Activated CD4-positive, alpha-beta T cell treated with anti-CD3 and anti-CD28 coated beads for 36 hours (primary cell): ENCODE measurements at regions of chr2 and their contacts with region 1.

Region 1: DNA sequence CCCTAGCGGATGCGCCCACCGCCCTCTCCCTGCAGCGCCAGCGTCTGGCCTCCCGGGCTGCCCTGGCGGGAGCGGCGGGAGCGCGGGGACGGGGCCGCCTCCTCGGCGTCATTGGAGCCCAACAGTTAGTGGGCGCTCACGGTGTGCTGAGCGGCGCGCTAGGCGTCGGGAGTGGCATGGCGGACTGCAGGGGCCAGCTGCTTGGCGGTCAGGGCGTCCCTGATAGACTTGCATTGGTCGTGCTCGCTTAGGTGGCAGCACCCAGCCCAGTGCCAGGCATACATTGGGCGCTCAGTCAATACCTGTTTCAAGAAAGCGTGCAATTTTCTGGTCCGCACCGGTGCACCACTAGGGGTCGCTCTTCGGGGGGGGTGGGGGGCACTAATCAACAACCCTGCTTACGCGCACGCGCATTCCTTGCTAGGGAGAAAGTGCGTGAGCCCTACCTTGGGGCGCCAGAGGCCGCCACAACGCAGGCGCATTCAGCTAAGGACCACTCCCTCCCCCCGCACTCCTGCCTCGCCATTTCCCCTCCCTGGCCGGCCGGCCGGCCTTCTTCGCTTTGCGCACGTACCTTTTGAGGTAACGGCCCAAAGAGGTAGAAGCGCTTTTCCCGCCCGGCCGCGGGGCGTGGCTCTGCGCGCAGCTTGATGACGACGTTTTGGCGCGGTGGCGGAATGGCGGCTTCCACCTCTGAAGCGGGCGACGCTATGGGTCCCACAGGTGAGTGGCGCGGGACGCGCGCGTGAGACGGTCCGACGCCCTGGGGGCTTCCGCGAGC is 411 bp upstream of the MZT2A start:
- DNase-seq: peak; percentile 95
- ATAC-seq: peak; percentile 81
- H3K4me3 Mint-ChIP-seq: peak overlapping the region; percentile 99
- H3K27ac Mint-ChIP-seq: peak overlapping the region; percentile 99
- H3K4me1 Mint-ChIP-seq: peaks cover 36% of the 10 kb centered on the region
- H3K27me3 Mint-ChIP-seq: no peaks in the 10 kb centered on the region

Region 2: GRCh38 chr2:130181325-130181879 is 1311.2 kb before region 1 on chr2 and contains the start of gene SMPD4:
- CTCF ChIA-PET with region 1: no interaction called
- POLR2A ChIA-PET with region 1: interaction called, 4 read pairs
- intact Hi-C with region 1: loop called (anchors 5 kb)
- DNase-seq: peak; percentile 98
- ATAC-seq: peak; percentile 74
- H3K4me3 Mint-ChIP-seq: peak within 1 kb of the TSS; percentile 95
- H3K27ac Mint-ChIP-seq: peak within 1 kb of the TSS; percentile 90
- H3K4me1 Mint-ChIP-seq: peaks cover 22% of the 10 kb centered on the region
- H3K27me3 Mint-ChIP-seq: no peaks in the 10 kb centered on the region
- total RNA-seq, gene SMPD4: 73.8 to 78.6 TPM

Region 3: GRCh38 chr2:130372055-130372832 is 1120.4 kb before region 1 on chr2:
- CTCF ChIA-PET with region 1: no interaction called
- POLR2A ChIA-PET with region 1: no interaction called
- intact Hi-C with region 1: loop called in 1 of 2 experiments (anchors 10 kb)
- DNase-seq: peak; percentile 85
- ATAC-seq: peak; percentile 68
- H3K4me3 Mint-ChIP-seq: peak overlapping the region; percentile 84
- H3K27ac Mint-ChIP-seq: peak overlapping the region; percentile 96
- H3K4me1 Mint-ChIP-seq: peaks cover 60% of the 10 kb centered on the region
- H3K27me3 Mint-ChIP-seq: no peaks in the 10 kb centered on the region

Region 4: GRCh38 chr2:131105156-131105949 is 387.3 kb before region 1 on chr2 and contains the start of gene PLEKHB2:
- CTCF ChIA-PET with region 1: no interaction called
- POLR2A ChIA-PET with region 1: interaction called, 4 read pairs
- intact Hi-C with region 1: loop called (anchors 2 kb)
- DNase-seq: peak; percentile 94
- ATAC-seq: peak; percentile 66
- H3K4me3 Mint-ChIP-seq: peak within 1 kb of the TSS; percentile 98
- H3K27ac Mint-ChIP-seq: peak within 1 kb of the TSS; percentile 99
- H3K4me1 Mint-ChIP-seq: peaks cover 43% of the 10 kb centered on the region
- H3K27me3 Mint-ChIP-seq: no peaks in the 10 kb centered on the region
- total RNA-seq, gene PLEKHB2: 39.9 to 42.4 TPM

Region 5: DNA sequence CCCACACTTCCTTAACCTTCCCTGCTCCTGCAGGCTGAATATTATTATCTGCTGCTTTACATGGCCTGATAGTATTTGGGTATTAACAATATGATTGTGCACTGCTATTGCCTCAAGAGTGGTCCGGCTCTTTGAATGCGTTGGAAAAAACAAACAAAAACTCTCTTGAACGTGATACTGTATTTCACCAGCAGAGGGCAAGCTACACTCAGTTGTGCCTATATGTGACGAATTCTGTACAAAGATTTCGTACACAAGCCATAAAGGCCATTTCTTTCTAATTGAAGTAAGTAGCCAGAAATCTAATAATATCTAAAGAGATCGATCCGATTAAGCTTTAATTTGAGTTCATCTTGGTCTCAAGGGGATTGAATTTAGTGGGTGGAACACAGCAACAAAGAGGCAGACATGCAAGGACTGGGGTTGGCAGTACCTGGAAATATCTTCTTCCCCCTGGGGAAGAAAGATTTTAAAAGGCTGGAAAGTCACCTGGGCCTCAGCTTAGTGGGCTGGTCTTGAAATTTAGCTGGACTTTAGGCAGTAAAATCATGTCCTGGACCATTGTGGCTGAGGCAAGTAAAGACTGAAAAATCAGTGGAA is 79.4 kb before region 1 on chr2:
- CTCF ChIA-PET with region 1: interaction called, 6 read pairs
- POLR2A ChIA-PET with region 1: no interaction called
- intact Hi-C with region 1: loop called (anchors 1 to 5 kb)
- DNase-seq: peak; percentile 24
- ATAC-seq: peak; percentile 66
- H3K4me3 Mint-ChIP-seq: no peak overlapping the region
- H3K27ac Mint-ChIP-seq: no peak overlapping the region
- H3K4me1 Mint-ChIP-seq: no peaks in the 10 kb centered on the region
- H3K27me3 Mint-ChIP-seq: peaks cover 26% of the 10 kb centered on the region

Region 6: DNA sequence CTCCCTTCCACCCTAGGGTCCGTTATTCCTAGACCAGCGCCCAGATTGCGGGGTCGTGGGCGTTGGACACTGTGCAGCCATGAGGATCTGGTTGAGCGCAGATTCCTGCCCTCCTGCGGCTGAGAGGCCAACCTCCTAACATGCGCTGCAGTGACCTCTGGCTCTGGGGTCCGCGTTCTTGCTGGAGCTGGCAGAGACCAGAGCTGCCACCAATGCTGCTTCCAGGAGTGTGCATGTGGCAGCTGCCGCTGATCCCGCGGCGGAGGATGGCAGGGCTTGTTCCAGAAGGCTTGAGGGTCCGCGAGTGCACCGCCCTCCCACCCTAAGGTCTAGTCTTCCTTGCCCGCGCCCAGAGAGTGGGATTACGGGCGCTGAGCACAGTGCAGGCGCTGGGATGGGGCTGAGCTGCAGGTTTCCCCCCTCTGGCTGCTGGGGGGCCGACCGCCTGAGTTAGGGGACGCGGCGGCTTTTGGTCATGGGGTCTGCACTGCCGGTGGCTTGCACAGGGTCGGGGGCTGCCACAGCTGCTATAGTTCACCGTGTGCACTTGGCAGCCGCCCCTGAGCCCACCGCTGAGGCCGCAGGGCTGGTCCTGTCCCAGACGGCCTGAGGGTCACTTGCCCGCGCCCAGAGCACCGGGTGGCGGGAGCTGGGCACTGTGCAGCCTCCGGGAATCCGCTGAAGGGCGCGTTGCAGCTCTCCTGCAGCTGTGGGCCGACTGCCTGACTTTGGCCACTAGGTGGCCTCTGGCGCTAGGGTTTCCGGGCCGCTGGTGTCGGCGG is 181.0 kb after region 1 on chr2:
- CTCF ChIA-PET with region 1: interaction called, 3 read pairs
- POLR2A ChIA-PET with region 1: no interaction called
- intact Hi-C with region 1: loop called in 1 of 2 experiments (anchors 2 kb)
- DNase-seq: peak; percentile 78
- ATAC-seq: peak; percentile 74
- H3K4me3 Mint-ChIP-seq: peak overlapping the region; percentile 19
- H3K27ac Mint-ChIP-seq: no peak overlapping the region
- H3K4me1 Mint-ChIP-seq: peaks cover 2% of the 10 kb centered on the region
- H3K27me3 Mint-ChIP-seq: peaks cover 24% of the 10 kb centered on the region

Region 7: GRCh38 chr2:132034646-132035045 is 542.0 kb after region 1 on chr2:
- CTCF ChIA-PET with region 1: no interaction called
- POLR2A ChIA-PET with region 1: no interaction called
- intact Hi-C with region 1: no loop called
- DNase-seq: no peak
- ATAC-seq: no peak
- H3K4me3 Mint-ChIP-seq: no peak overlapping the region
- H3K27ac Mint-ChIP-seq: no peak overlapping the region
- H3K4me1 Mint-ChIP-seq: peaks cover 7% of the 10 kb centered on the region
- H3K27me3 Mint-ChIP-seq: peaks cover 13% of the 10 kb centered on the region